Heart right ventricle (tissue), 16 donors: ENCODE measurements at regions of chr6 and their contacts with region 1.

Region 1: DNA sequence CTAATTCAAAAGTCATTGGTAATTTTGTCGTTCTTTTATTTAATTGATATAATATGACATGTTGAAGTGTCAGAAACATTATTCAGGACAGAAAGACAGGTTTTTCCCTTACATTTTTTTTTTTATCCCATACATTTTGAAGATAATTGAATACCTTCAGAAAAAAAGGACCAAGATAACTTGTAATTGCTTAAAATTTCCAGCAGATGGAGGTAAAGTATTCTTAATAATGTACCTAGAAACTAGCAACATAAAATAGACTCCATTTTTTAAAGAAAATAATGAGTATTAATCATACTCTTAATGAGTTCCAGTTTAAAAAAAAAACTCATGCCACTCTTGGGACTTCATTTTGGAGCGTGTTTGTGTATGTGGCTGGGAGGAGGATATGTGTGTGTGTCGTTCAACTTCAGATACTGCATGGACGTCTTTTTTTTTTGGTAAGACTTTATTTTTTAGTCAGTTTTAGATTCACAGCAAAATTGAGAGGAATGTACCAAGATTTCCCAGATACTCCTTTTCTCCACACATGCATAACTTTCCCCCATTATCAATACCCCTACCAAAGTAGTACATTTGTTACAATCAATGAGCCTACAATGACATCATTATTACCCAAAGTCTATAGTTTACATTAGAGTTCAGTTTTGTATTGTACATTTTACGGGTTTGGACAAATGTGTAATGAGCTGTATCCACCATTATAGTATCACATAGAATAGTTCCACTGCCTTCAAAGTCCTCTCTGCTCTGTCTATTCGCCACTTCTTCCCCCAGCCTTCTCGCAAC is 79.4 kb downstream of the ROS1 start:
- DNase-seq: no peak
- ATAC-seq: peak in 1 of 8 donors; percentile 11
- H3K4me3 ChIP-seq: peak overlapping the region in 2 of 10 donors; percentile 20 to 23
- H3K27ac ChIP-seq: no peak overlapping the region
- H3K4me1 ChIP-seq: no peaks in the 10 kb centered on the region
- H3K27me3 ChIP-seq: peaks cover 0 to 9% (median 0%) of the 10 kb centered on the region in 7 donors
- CTCF ChIP-seq: peak; percentile 26 to 73 (median 59)

Region 2: GRCh38 chr6:117280922-117281321 is 65.4 kb before region 1 on chr6:
- intact Hi-C with region 1: no loop called
- DNase-seq: no peak
- ATAC-seq: peak in 1 of 8 donors; percentile 55
- H3K4me3 ChIP-seq: no peak overlapping the region
- H3K27ac ChIP-seq: no peak overlapping the region
- H3K4me1 ChIP-seq: no peaks in the 10 kb centered on the region
- H3K27me3 ChIP-seq: peaks cover 0 to 32% (median 21%) of the 10 kb centered on the region in 7 donors
- CTCF ChIP-seq: peak in 5 of 9 donors; percentile 29 to 37 (median 34)

Region 3: GRCh38 chr6:117555882-117556498 is 209.7 kb after region 1 on chr6:
- intact Hi-C with region 1: loop called in 8 of 10 experiments (anchors 2 to 10 kb)
- DNase-seq: peak in 1 of 2 donors; percentile 41
- ATAC-seq: peak in 1 of 8 donors; percentile 37
- H3K4me3 ChIP-seq: no peak overlapping the region
- H3K27ac ChIP-seq: no peak overlapping the region
- H3K4me1 ChIP-seq: peaks cover 0 to 7% (median 0%) of the 10 kb centered on the region in 9 donors
- H3K27me3 ChIP-seq: no peaks in the 10 kb centered on the region
- CTCF ChIP-seq: peak; percentile 84 to 96 (median 88)

Region 4: DNA sequence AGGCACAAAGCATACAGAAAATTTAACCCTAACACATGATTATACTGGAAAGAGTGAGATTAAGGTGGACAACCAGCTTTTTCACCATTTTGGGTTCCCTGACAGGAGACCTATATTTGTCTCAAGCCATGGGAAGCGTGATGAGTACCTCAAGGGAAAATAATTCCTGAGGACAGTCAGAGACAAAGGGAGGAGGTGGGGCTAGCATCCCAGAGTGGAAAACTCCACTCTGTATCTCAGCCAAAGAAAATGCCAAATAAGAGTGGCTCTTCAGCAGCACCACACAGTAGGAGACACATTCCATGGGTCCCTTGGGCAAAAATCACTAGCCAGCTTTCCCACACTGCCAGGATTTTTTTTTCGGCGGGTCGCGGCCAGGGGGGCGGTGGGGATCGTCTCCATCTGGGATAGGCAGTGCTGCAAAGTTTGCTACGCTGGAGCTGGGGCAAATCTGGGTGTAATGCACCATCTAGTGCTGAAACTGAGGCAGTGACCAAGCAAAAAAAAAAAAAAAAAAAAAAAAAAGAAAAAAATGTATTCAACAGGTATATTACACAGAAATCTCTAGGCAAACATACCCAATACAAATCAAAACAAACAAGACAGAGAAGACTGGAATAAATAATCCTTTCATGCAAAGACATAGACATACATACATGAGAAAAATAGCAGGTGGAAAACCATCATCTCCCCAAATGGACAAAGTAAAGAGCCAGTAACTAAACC is 483.4 kb after region 1 on chr6:
- intact Hi-C with region 1: loop called in 1 of 10 experiments (anchors 10 kb)
- DNase-seq: no peak
- ATAC-seq: peak in 2 of 8 donors; percentile 29 to 51
- H3K4me3 ChIP-seq: no peak overlapping the region
- H3K27ac ChIP-seq: no peak overlapping the region
- H3K4me1 ChIP-seq: no peaks in the 10 kb centered on the region
- H3K27me3 ChIP-seq: no peaks in the 10 kb centered on the region
- CTCF ChIP-seq: peak in 5 of 9 donors; percentile 25 to 37 (median 29)